ENCODE measurements at regions of chrX and their contacts with region 1.

Region 1: GRCh38 chrX:98956011-98956410 is 1454.1 kb downstream of the PCDH19 start:
- DNase-seq: no peak
- H3K4me3 ChIP-seq: no peak overlapping the region
- H3K27ac ChIP-seq: no peak overlapping the region
- H3K4me1 ChIP-seq: no peaks in the 10 kb centered on the region
- H3K27me3 ChIP-seq: no peaks in the 10 kb centered on the region
- CTCF ChIP-seq: no peak
- EP300 ChIP-seq: no peak
- POLR2A ChIP-seq: no peak

Region 2: GRCh38 chrX:98707896-98708295 is 248.1 kb before region 1 on chrX:
- in situ Hi-C with region 1: no loop called
- intact Hi-C with region 1: no loop called
- DNase-seq: no peak
- H3K4me3 ChIP-seq: no peak overlapping the region
- H3K27ac ChIP-seq: no peak overlapping the region
- H3K4me1 ChIP-seq: no peaks in the 10 kb centered on the region
- H3K27me3 ChIP-seq: no peaks in the 10 kb centered on the region
- CTCF ChIP-seq: no peak
- EP300 ChIP-seq: no peak
- POLR2A ChIP-seq: no peak

Region 3: DNA sequence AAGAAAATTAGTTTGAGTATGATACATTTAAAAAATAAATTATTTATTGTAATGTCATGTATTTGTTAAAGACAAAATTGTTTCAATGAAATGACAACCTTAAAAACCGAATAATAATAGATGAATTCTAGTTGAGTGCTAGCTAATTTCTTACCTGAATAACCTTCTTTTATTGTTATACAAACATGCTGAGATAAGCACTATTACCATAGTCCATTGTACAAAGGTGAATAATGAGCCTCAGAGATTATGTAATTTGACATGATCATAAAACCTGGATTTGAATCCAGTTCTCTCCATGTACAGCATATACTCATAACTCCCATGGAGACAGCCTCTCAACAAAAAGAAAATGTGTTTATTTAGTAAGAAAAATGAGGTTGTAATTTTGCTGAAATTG is 58.8 kb before region 1 on chrX:
- in situ Hi-C with region 1: no loop called
- intact Hi-C with region 1: no loop called
- DNase-seq: no peak
- H3K4me3 ChIP-seq: no peak overlapping the region
- H3K27ac ChIP-seq: no peak overlapping the region
- H3K4me1 ChIP-seq: no peaks in the 10 kb centered on the region
- H3K27me3 ChIP-seq: no peaks in the 10 kb centered on the region
- CTCF ChIP-seq: no peak
- EP300 ChIP-seq: no peak
- POLR2A ChIP-seq: no peak

Region 4: DNA sequence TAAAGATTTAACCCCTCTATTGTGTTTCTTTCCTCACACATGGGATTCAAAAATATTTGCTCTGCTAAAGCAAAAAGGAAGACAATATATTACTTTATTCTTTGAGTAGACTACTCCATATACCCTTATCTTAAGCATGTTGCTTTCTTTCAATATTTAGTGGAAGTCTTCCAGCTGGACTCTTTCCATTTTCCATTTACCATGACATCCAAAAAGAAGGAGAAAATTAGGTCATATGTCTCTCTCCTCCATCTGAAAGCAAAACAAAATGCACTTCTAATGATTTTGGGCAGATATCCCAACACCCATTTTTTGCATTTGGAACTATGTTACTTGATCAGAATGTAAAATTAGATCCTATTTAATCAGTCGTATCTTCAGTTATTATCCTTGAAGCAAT is 117.5 kb after region 1 on chrX:
- in situ Hi-C with region 1: loop called in 1 of 4 experiments (anchors 25 kb)
- intact Hi-C with region 1: no loop called
- DNase-seq: no peak
- H3K4me3 ChIP-seq: no peak overlapping the region
- H3K27ac ChIP-seq: no peak overlapping the region
- H3K4me1 ChIP-seq: no peaks in the 10 kb centered on the region
- H3K27me3 ChIP-seq: no peaks in the 10 kb centered on the region
- CTCF ChIP-seq: no peak
- EP300 ChIP-seq: no peak
- POLR2A ChIP-seq: no peak

Region 5: DNA sequence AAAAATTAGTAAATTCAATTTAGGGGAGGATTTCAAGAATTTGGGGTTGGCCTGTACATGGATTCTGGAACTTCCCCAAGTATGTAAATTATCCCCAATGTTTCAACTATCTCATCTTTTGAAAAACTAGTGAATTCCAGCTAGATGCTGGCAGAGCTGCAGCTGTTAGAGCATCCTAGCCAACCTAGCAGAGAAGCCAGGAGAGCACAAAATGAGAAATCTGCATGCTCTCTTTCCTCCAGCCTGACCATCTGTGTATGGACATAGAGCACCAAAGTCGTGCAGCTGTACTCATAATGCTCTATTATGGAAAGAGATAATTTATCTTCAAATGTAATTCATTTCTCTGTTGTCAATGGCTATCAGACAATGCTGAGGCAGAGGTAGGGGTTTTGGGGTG is 236.4 kb after region 1 on chrX:
- in situ Hi-C with region 1: no loop called
- intact Hi-C with region 1: no loop called
- DNase-seq: no peak
- H3K4me3 ChIP-seq: no peak overlapping the region
- H3K27ac ChIP-seq: no peak overlapping the region
- H3K4me1 ChIP-seq: no peaks in the 10 kb centered on the region
- H3K27me3 ChIP-seq: no peaks in the 10 kb centered on the region
- CTCF ChIP-seq: no peak
- EP300 ChIP-seq: no peak
- POLR2A ChIP-seq: no peak

Measured in transverse colon (tissue), 4 donors.